Activated CD8-positive, alpha-beta memory T cell treated with anti-CD3 and anti-CD28 coated beads, Interleukin-2, amount 10 ng/mL, durations not matched to agents 7 days and 5 days (primary cell): ENCODE measurements at regions of chr3 and their contacts with region 1.

Region 1: GRCh38 chr3:138915503-138916498 is 31.1 kb downstream of the FOXL2 start:
- DNase-seq: peak; percentile 85
- ATAC-seq: peak; percentile 87
- H3K4me3 Mint-ChIP-seq: peak overlapping the region; percentile 75
- H3K27ac Mint-ChIP-seq: peak overlapping the region; percentile 40
- H3K4me1 Mint-ChIP-seq: peaks cover 7% of the 10 kb centered on the region
- H3K27me3 Mint-ChIP-seq: peaks cover 20% of the 10 kb centered on the region

Region 2: DNA sequence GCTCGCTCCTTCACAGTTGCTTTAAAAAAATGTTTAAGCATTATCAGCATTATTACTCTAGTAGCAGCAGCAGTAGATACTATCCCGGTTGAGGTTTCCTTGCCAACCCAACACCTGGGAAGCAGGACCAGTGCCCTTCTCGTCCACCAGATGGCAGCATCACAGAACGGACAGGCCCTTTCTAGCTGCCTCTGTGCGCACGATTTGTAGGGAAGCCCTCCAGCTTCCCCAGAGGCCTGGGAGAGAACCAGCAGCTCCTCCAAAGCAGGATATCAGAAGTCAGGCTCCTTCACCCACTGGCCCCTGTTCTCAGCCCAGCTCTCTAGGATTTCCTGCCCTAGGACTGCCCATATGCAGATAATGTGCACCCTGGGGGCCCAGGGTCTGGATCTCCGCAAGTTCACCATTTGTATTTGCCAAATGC is 498.2 kb before region 1 on chr3:
- CTCF ChIA-PET with region 1: interaction called, 12 read pairs
- DNase-seq: peak; percentile 74
- ATAC-seq: peak; percentile 82
- H3K4me3 Mint-ChIP-seq: no peak overlapping the region
- H3K27ac Mint-ChIP-seq: no peak overlapping the region
- H3K4me1 Mint-ChIP-seq: peaks cover 4% of the 10 kb centered on the region
- H3K27me3 Mint-ChIP-seq: peaks cover 40% of the 10 kb centered on the region

Region 3: DNA sequence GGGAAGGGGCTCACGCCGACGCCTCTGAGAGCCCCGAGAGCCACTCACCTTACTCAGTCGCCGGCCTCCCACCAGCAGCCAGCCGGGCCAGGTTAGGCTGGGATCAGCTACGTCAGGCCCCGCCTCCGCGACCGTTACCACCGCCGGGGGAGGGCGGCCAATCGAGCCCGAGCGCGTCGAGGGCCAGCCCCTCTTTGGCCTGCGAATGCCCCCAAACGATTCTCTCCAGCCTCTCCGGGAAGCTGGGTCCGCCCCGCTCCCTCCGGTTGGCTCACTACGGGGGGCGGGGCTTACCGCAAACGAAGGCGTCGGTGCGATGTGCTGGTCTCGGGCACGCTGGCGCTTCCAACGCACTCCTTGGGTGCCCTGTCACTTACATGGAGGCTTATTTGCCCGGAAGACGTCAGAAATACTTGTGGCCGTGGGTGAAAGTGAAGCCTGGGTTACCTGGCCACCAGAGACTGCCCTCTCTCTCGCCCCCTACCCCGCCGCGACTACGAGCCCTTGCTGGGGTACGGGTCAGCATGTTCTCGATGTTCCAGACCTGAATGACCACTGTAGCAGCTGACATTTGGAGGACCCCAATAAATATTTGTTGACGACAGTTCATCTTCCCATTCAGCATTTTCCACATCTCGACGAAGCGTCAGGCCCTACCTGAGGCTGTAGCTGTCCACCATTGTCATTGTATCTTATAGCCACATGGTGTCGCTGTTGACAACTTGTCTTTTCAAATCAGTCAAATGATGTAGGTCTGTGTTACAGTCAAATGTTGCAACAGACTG is 321.5 kb before region 1 on chr3 and contains the start of gene CEP70:
- CTCF ChIA-PET with region 1: interaction called, 125 read pairs
- DNase-seq: peak; percentile 93
- ATAC-seq: peak; percentile 95
- H3K4me3 Mint-ChIP-seq: peak within 1 kb of the TSS; percentile 88
- H3K27ac Mint-ChIP-seq: peak within 1 kb of the TSS; percentile 86
- H3K4me1 Mint-ChIP-seq: peaks cover 11% of the 10 kb centered on the region
- H3K27me3 Mint-ChIP-seq: no peaks in the 10 kb centered on the region
- total RNA-seq, gene CEP70: 9.8 to 10.5 TPM

Region 4: DNA sequence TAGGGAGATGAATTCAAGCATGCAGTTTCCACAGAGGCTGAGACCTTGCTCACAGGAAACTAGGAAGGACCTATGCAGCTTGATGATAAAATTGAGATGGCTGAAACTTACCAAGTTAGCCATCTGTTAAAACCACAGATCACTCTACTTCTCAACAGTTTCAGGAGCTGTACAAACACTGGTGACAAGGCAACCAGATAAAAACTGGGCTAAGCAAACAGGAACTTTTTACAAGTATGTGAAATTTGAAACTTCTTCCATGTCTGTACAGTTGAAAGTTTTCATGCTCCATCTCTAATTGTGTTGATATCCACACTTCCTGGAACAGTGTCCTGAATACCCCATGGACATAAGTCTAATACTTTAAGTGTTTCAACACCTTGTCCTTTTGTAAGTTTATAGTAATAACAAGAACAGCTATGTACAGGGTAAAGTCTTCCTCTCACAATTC is 229.0 kb before region 1 on chr3:
- CTCF ChIA-PET with region 1: interaction called, 49 read pairs
- DNase-seq: no peak
- ATAC-seq: peak; percentile 71
- H3K4me3 Mint-ChIP-seq: no peak overlapping the region
- H3K27ac Mint-ChIP-seq: peak overlapping the region; percentile 67
- H3K4me1 Mint-ChIP-seq: peaks cover 13% of the 10 kb centered on the region
- H3K27me3 Mint-ChIP-seq: no peaks in the 10 kb centered on the region

Region 5: GRCh38 chr3:138712086-138712485 is 203.7 kb before region 1 on chr3:
- CTCF ChIA-PET with region 1: interaction called, 17 read pairs
- DNase-seq: no peak
- ATAC-seq: no peak
- H3K4me3 Mint-ChIP-seq: no peak overlapping the region
- H3K27ac Mint-ChIP-seq: no peak overlapping the region
- H3K4me1 Mint-ChIP-seq: no peaks in the 10 kb centered on the region
- H3K27me3 Mint-ChIP-seq: no peaks in the 10 kb centered on the region

Region 6: GRCh38 chr3:138781012-138781470 is 134.8 kb before region 1 on chr3:
- CTCF ChIA-PET with region 1: interaction called, 14 read pairs
- DNase-seq: peak; percentile 73
- ATAC-seq: peak; percentile 95
- H3K4me3 Mint-ChIP-seq: peak overlapping the region; percentile 47
- H3K27ac Mint-ChIP-seq: peak overlapping the region; percentile 69
- H3K4me1 Mint-ChIP-seq: peaks cover 31% of the 10 kb centered on the region
- H3K27me3 Mint-ChIP-seq: no peaks in the 10 kb centered on the region

Region 7: DNA sequence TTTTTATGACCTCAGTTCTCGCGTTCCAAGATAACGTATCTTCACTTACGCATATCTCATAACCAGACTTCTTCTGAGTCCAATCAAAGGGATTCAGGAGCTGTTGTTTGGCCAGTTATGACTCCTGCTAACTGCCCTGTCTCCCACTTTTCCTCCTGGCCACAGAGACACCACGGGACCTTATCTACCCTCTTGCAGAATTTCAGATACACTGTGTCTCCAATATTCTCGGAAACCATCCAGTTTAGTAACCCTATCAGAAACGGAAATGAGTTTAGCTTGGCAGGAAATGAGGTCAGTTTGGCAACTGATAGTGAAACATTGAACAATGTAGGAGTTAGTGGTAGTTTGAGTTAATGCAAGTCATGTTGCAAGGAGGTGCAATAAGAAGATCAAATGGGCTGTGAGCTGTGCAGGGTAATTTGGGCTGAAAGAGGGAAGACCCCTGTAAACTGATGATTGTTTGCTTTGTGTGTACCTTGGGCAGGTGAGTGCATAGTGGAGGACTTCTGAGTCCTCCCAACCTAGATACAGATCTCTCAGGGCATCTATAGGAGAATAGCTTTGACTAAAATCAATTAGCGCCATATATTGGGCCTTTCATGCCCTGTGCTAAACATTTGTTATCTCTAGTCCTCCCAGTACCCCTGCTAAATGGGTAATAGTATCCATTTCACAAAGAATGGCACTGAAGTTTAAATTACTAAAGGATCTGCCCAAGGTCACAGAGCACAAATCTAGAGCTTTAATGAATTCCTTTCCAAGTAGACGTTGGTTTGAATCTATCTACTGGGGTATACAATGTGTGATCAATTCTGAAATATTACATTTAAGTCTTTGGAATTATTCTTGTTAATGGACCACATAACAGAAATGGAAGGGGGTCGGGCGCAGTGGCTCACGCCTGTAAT is 39.8 kb before region 1 on chr3:
- CTCF ChIA-PET with region 1: interaction called, 15 read pairs
- DNase-seq: no peak
- ATAC-seq: peak; percentile 67
- H3K4me3 Mint-ChIP-seq: no peak overlapping the region
- H3K27ac Mint-ChIP-seq: peak overlapping the region; percentile 27
- H3K4me1 Mint-ChIP-seq: peaks cover 12% of the 10 kb centered on the region
- H3K27me3 Mint-ChIP-seq: no peaks in the 10 kb centered on the region